ENCODE measurements at regions of chr11 and their contacts with region 1.

Region 1: GRCh38 chr11:128323381-128323780 is 264.0 kb downstream of the ETS1 start:
- DNase-seq: peak; percentile 77
- ATAC-seq: peak; percentile 25
- H3K4me3 Mint-ChIP-seq: peak overlapping the region; percentile 60
- H3K27ac Mint-ChIP-seq: peak overlapping the region; percentile 93
- H3K4me1 Mint-ChIP-seq: peaks cover 91% of the 10 kb centered on the region
- H3K27me3 Mint-ChIP-seq: no peaks in the 10 kb centered on the region

Region 2: GRCh38 chr11:128290106-128290840 is 33.1 kb before region 1 on chr11:
- CTCF ChIA-PET with region 1: interaction called, 60 read pairs
- DNase-seq: peak; percentile 86
- ATAC-seq: peak; percentile 70
- H3K4me3 Mint-ChIP-seq: peak overlapping the region; percentile 86
- H3K27ac Mint-ChIP-seq: peak overlapping the region; percentile 92
- H3K4me1 Mint-ChIP-seq: peaks cover 86% of the 10 kb centered on the region
- H3K27me3 Mint-ChIP-seq: no peaks in the 10 kb centered on the region

Region 3: GRCh38 chr11:128336203-128336602 is 12.8 kb after region 1 on chr11:
- CTCF ChIA-PET with region 1: interaction called, 31 read pairs
- DNase-seq: no peak
- ATAC-seq: no peak
- H3K4me3 Mint-ChIP-seq: no peak overlapping the region
- H3K27ac Mint-ChIP-seq: no peak overlapping the region
- H3K4me1 Mint-ChIP-seq: peaks cover 35% of the 10 kb centered on the region
- H3K27me3 Mint-ChIP-seq: no peaks in the 10 kb centered on the region

Region 4: DNA sequence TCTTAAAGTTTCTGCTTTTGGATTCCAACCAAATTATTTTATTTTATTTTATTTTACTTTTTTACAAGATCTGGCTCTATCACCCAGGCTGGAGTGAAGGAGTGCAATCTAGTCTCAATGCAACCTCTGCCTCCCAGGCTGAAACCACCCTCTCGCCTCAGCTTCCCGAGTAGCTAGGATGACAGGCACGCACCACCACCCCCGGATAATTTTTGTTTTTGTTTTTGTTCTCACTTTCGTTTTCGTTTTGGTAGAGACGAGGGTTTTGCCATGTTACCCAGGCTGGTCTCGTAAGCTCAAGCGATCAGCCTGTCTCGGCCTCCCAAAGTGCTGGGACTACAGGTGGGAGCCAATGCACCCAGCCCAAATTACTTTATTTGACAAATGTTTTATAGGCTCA is 44.2 kb after region 1 on chr11:
- CTCF ChIA-PET with region 1: interaction called, 10 read pairs
- DNase-seq: peak; percentile 72
- ATAC-seq: peak; percentile 94
- H3K4me3 Mint-ChIP-seq: peak overlapping the region; percentile 60
- H3K27ac Mint-ChIP-seq: peak overlapping the region; percentile 76
- H3K4me1 Mint-ChIP-seq: peaks cover 8% of the 10 kb centered on the region
- H3K27me3 Mint-ChIP-seq: no peaks in the 10 kb centered on the region

Region 5: GRCh38 chr11:128472128-128473089 is 149.0 kb after region 1 on chr11:
- CTCF ChIA-PET with region 1: interaction called, 37 read pairs
- DNase-seq: peak; percentile 71
- ATAC-seq: peak; percentile 69
- H3K4me3 Mint-ChIP-seq: peak overlapping the region; percentile 59
- H3K27ac Mint-ChIP-seq: peak overlapping the region; percentile 95
- H3K4me1 Mint-ChIP-seq: peaks cover 95% of the 10 kb centered on the region
- H3K27me3 Mint-ChIP-seq: no peaks in the 10 kb centered on the region

Region 6: DNA sequence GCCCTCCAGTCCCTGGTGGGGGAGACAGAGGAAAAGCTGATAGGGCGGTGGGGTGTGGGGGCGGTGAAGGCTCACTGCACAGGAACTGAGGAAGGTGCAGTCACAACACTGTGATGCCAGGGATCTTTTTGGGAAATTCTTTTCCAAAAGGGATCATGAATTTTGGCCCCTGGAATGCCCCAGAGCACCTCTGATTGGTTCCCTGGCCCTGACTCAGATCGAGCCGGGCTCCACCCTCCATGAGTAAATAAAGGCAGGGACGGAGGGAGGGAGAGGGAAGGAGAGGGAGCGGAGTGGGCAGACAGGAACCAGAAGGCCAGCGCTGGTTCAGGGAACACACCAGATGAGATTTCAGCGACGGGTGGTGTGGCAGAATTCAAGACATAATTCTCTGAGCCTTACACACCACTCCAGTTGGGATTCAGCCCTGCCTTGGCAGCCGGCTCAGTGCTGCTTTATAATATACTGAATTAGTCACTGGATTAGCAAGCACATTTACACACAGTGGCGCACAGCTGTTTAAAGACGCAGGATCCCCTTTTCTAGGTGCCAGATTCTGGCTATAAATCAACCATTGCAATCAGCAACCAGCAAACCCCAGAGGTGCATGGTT is 183.7 kb after region 1 on chr11:
- CTCF ChIA-PET with region 1: interaction called, 16 read pairs
- DNase-seq: no peak
- ATAC-seq: peak; percentile 17
- H3K4me3 Mint-ChIP-seq: peak overlapping the region; percentile 99
- H3K27ac Mint-ChIP-seq: peak overlapping the region; percentile 86
- H3K4me1 Mint-ChIP-seq: peaks cover 97% of the 10 kb centered on the region
- H3K27me3 Mint-ChIP-seq: no peaks in the 10 kb centered on the region